ENCODE measurements at regions of chr1 and their contacts with region 1.

Region 1: GRCh38 chr1:113389953-113390834 is at the start of gene MAGI3:
- DNase-seq: peak; percentile 84 to 97 (median 91)
- ATAC-seq: peak; percentile 95
- H3K4me3 ChIP-seq: peak within 1 kb of the TSS; percentile 88
- H3K4me3 Mint-ChIP-seq: peak within 1 kb of the TSS; percentile 84 to 98 (median 94)
- H3K27ac ChIP-seq: peak within 1 kb of the TSS; percentile 71
- H3K27ac Mint-ChIP-seq: peak within 1 kb of the TSS; percentile 38 to 89 (median 85)
- H3K4me1 ChIP-seq: peaks cover 0 to 16% of the 10 kb centered on the region in 2 donors
- H3K4me1 Mint-ChIP-seq: peaks cover 22 to 31% (median 26%) of the 10 kb centered on the region in 7 donors
- H3K27me3 ChIP-seq: no peaks in the 10 kb centered on the region
- H3K27me3 Mint-ChIP-seq: peaks cover 0 to 42% (median 6%) of the 10 kb centered on the region in 5 donors
- total RNA-seq, gene MAGI3: 5.7 to 8.8 (median 7.2) TPM

Region 2: DNA sequence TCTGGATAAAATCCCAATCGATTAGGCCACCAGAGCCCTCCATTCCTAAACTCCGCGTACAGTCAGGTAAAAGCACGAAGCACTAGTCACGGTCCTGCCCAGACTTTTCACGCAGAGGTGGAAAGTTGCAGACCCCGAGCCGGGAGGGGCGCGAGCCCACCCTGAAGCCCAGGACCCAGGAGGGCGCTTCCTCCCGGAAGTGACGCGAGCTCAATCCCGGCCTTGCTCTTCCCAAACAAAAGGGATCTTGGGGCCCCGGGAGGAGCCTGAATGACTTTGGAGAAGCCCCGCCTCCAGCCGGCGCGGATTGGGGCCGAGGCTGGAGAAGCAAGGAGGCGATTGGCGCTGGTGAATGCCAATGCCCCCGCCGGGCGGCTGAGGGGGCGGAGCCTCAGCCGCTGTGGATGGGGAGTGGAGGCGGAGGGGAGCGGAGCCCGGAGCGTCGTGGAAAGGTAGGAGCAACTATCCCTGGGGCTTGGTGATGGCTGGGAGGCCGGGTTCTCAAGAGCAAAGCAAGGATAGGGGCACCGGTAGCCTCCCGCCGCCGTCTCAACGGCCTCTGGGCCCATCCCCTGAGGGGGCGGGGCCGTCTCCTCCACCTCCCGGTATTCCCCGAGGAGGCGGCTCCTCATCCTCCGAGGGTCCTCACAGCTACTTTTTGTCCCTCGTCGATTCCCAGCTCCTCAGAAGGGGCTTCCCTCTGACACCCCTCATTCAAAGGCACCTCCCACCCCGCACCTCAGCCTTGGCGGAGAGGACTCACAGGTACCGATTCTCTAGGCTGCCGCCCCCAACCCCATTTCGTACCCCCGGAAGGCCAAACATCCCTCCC is 994.2 kb before region 1 on chr1 and contains the start of gene CTTNBP2NL:
- CTCF ChIA-PET with region 1: no interaction called
- POLR2A ChIA-PET with region 1: no interaction called
- intact Hi-C with region 1: loop called in 1 of 2 experiments (anchors 5 kb)
- DNase-seq: peak; percentile 40 to 83 (median 67)
- ATAC-seq: peak; percentile 95
- H3K4me3 ChIP-seq: peak within 1 kb of the TSS; percentile 91
- H3K4me3 Mint-ChIP-seq: peak within 1 kb of the TSS; percentile 80 to 95 (median 92)
- H3K27ac ChIP-seq: peak within 1 kb of the TSS; percentile 32
- H3K27ac Mint-ChIP-seq: peak within 1 kb of the TSS in 8 of 9 donors; percentile 6 to 88 (median 60)
- H3K4me1 ChIP-seq: peaks cover 7 to 14% of the 10 kb centered on the region in 2 donors
- H3K4me1 Mint-ChIP-seq: peaks cover 13 to 37% (median 20%) of the 10 kb centered on the region in 7 donors
- H3K27me3 ChIP-seq: peaks cover 0 to 3% of the 10 kb centered on the region in 2 donors
- H3K27me3 Mint-ChIP-seq: peaks cover 13 to 26% (median 18%) of the 10 kb centered on the region in 5 donors
- total RNA-seq, gene CTTNBP2NL: 0.32 to 1.8 (median 0.90) TPM

Region 3: DNA sequence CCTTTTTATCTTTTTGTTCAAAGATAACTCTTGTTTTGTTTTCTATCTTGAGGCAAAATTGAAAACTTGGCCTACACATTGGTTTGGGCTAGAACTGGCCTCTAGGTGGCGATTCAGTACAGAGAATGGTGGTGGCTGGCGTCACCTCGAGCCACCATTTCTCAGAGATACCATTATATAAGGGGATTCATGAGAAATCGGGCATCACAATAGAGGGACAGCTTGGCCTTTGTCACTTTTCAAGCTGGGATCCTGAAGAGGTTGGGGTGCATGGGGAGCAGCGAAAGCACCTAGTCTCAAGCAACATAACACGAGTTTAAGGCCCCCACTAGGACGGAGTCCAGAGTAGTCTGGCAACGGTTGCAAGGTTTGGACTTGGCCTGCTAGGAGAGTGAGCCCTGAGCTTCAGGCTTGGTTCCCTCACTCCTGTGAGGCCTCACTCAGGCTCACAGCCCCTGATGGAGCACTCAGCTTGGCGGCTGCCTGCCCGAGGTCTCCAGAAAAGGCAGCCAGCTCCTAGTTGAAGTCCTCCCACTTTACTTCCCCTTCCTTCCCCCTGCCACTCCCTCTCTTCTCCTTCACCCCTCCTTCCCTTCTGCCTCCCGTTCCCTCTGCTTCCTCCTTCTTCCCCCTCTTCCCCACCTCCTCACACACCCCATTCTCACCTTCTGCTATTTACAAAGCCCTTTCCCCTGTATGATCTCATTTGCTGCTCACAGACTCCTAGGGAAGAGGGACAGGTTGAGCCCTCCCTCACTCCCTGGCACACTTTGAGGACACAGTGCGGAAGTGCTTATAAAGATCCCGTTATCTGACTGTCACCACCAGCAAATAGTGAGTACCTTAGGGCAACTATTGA is 249.4 kb before region 1 on chr1:
- CTCF ChIA-PET with region 1: no interaction called
- POLR2A ChIA-PET with region 1: no interaction called
- intact Hi-C with region 1: loop called (anchors 2 to 10 kb)
- DNase-seq: peak in 8 of 9 donors; percentile 8 to 62 (median 47)
- ATAC-seq: peak; percentile 87
- H3K4me3 ChIP-seq: no peak overlapping the region
- H3K4me3 Mint-ChIP-seq: peak overlapping the region in 2 of 10 donors; percentile 21 to 59
- H3K27ac ChIP-seq: no peak overlapping the region
- H3K27ac Mint-ChIP-seq: peak overlapping the region in 4 of 9 donors; percentile 21 to 49 (median 46)
- H3K4me1 ChIP-seq: peaks cover 0 to 8% of the 10 kb centered on the region in 2 donors
- H3K4me1 Mint-ChIP-seq: peaks cover 8 to 25% (median 19%) of the 10 kb centered on the region in 7 donors
- H3K27me3 ChIP-seq: no peaks in the 10 kb centered on the region
- H3K27me3 Mint-ChIP-seq: no peaks in the 10 kb centered on the region

Region 4: DNA sequence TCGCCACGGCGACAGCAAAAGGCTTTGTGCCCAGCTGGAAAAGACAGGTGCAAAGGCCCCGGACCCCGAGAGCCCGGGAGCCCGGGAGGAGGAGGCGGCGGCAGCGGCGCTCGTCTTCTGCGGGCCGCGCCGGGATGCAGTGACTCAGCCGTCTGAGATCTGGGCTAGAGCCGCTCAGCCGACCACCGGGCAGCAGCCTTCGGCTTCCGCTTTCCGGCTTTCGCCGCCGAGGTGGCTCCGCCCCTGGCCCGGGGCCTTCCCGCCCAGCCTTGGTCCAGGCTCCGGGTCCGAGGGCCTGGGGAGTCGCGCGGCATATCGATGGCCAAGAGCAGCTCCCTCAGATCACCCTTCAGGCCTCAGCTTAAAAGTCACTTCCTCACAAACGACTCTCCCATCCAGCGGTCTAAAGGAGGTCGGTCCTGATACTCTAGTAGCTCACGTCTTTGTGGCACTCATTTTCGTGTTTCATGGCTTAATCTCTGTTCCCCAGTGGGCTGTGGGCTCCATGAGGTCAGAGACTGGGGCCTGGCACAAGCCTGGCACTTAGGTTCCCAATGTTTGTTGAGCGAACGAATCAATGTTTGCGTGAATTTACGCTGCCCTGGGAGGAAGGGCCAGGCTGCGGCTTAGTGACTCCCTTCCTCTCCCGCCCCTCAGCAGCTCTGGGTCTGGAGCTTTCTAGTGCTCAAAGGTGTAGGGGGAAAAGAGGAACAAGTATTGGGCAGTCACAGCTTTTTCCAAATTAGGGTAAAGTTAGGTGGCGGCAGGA is 369.3 kb after region 1 on chr1 and contains the start of gene PHTF1:
- CTCF ChIA-PET with region 1: no interaction called
- POLR2A ChIA-PET with region 1: interaction called, 3 read pairs
- intact Hi-C with region 1: loop called (anchors 2 to 5 kb)
- DNase-seq: peak in 8 of 9 donors; percentile 14 to 74 (median 23)
- ATAC-seq: peak; percentile 88
- H3K4me3 ChIP-seq: peak within 1 kb of the TSS; percentile 81
- H3K4me3 Mint-ChIP-seq: peak within 1 kb of the TSS; percentile 91 to 97 (median 93)
- H3K27ac ChIP-seq: peak within 1 kb of the TSS; percentile 74
- H3K27ac Mint-ChIP-seq: peak within 1 kb of the TSS; percentile 87 to 96 (median 90)
- H3K4me1 ChIP-seq: peaks cover 0 to 16% of the 10 kb centered on the region in 2 donors
- H3K4me1 Mint-ChIP-seq: peaks cover 0 to 36% (median 24%) of the 10 kb centered on the region in 7 donors
- H3K27me3 ChIP-seq: no peaks in the 10 kb centered on the region
- H3K27me3 Mint-ChIP-seq: no peaks in the 10 kb centered on the region
- total RNA-seq, gene PHTF1: 2.5 to 21.0 (median 7.1) TPM

Region 5: GRCh38 chr1:113904674-113905434 is 514.7 kb after region 1 on chr1 and contains the starts of genes AP4B1 and DCLRE1B:
- CTCF ChIA-PET with region 1: no interaction called
- POLR2A ChIA-PET with region 1: no interaction called
- intact Hi-C with region 1: loop called in 1 of 2 experiments (anchors 1 kb)
- DNase-seq: peak; percentile 88 to 98 (median 97)
- ATAC-seq: peak; percentile 96
- H3K4me3 ChIP-seq: peak within 1 kb of the TSS; percentile 82
- H3K4me3 Mint-ChIP-seq: peak within 1 kb of the TSS; percentile 92 to 100 (median 99)
- H3K27ac ChIP-seq: peak within 1 kb of the TSS; percentile 89
- H3K27ac Mint-ChIP-seq: peak within 1 kb of the TSS; percentile 96 to 100 (median 99)
- H3K4me1 ChIP-seq: peaks cover 15 to 21% of the 10 kb centered on the region in 2 donors
- H3K4me1 Mint-ChIP-seq: peaks cover 36 to 62% (median 54%) of the 10 kb centered on the region in 7 donors
- H3K27me3 ChIP-seq: no peaks in the 10 kb centered on the region
- H3K27me3 Mint-ChIP-seq: peaks cover 0 to 4% (median 0%) of the 10 kb centered on the region in 5 donors
- total RNA-seq, gene AP4B1: 50.8 to 75.4 (median 65.0) TPM
- total RNA-seq, gene DCLRE1B: 4.1 to 13.6 (median 6.9) TPM

Region 6: DNA sequence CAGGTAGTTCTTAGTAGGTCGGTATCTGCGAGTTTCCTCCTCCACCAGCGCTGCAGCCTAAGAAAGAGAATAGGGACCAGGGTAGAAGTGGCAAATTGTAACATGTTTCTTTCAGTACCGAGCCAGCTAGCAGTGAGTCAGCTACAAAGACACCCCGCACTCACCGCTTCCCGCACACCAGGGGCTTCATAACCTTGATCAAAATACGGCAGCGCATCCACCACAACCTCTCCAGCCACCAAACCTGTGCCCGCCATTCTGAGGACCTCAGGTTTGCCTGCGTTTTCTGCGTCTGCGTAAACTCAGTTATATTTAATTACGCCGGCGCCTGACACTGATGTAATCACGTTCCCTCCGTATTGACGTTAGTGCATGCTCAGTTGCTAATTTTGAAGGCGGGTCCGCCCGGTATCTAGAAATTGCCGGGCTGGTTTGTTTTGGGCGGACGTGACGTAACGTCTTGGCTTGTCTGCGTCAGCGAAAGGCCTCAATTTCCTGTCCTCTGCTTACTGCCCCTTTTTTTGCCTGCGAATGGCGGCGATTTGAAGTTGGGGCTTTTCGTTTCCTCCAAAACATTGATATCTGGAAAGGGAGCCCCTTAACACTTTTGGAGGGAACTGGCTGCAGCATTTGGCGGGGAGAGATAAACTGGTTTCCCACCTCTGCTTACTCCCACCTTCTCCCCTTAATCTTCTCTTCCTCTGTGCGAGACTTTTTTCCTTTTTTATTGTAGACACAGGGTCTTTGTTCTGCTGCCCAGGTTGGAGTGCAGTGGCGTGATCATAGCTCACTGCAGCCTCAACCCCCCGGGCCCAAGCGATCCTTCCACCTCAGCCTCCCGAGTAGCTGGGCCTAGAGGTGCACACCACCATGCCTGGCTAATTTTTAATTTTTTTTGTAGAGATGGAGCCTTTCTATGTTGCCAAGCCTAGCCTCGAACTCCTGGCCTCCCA is 1191.4 kb after region 1 on chr1 and contains the start of gene BCAS2:
- CTCF ChIA-PET with region 1: no interaction called
- POLR2A ChIA-PET with region 1: no interaction called
- intact Hi-C with region 1: loop called (anchors 1 to 5 kb)
- DNase-seq: peak; percentile 71 to 98 (median 97)
- ATAC-seq: peak; percentile 97
- H3K4me3 ChIP-seq: peak within 1 kb of the TSS; percentile 76
- H3K4me3 Mint-ChIP-seq: peak within 1 kb of the TSS; percentile 92 to 99 (median 98)
- H3K27ac ChIP-seq: peak within 1 kb of the TSS; percentile 93
- H3K27ac Mint-ChIP-seq: peak within 1 kb of the TSS; percentile 95 to 99 (median 98)
- H3K4me1 ChIP-seq: peaks cover 21 to 23% of the 10 kb centered on the region in 2 donors
- H3K4me1 Mint-ChIP-seq: peaks cover 14 to 55% (median 41%) of the 10 kb centered on the region in 7 donors
- H3K27me3 ChIP-seq: peaks cover 0 to 3% of the 10 kb centered on the region in 2 donors
- H3K27me3 Mint-ChIP-seq: peaks cover 0 to 4% (median 4%) of the 10 kb centered on the region in 5 donors
- total RNA-seq, gene BCAS2: 32.3 to 87.1 (median 46.0) TPM

Measured in naive thymus-derived CD4-positive, alpha-beta T cell (primary cell).